ENCODE measurements at regions of chr4 and their contacts with region 1.

Region 1: DNA sequence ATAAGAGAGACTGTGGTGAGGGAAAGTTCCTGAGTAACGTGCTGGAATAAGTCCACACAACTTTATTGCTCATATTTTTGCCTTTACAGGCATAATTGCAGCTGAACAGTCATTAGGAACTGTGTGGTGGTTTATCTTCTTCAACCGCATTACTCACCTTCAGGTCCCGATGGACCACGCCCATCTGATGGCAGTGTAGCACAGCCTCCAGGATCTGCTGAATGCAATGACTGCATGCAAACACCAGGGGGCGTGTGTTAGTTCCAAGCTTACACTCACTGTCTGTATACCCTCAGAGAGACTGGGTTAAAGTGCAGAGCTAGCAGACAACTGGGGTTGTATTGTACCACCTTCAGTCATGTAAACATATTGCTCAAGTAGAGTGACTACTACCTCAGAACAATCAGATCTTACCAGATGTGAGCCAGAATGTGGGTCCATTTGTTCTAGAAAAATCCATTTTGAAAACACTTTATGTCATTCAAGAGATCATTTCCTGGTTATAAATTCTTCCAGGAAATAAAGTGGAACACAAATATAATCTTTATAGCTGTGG is 214.0 kb downstream of the CAMK2D start:
- DNase-seq: peak; percentile 75 to 96 (median 86)
- ATAC-seq: peak; percentile 99
- H3K4me3 ChIP-seq: no peak overlapping the region
- H3K4me3 Mint-ChIP-seq: no peak overlapping the region
- H3K27ac ChIP-seq: no peak overlapping the region
- H3K27ac Mint-ChIP-seq: peak overlapping the region; percentile 68
- H3K4me1 ChIP-seq: peaks cover 5% of the 10 kb centered on the region
- H3K4me1 Mint-ChIP-seq: peaks cover 11% of the 10 kb centered on the region
- H3K27me3 ChIP-seq: no peaks in the 10 kb centered on the region
- H3K27me3 Mint-ChIP-seq: no peaks in the 10 kb centered on the region
- CTCF ChIP-seq: peak; percentile 95

Region 2: DNA sequence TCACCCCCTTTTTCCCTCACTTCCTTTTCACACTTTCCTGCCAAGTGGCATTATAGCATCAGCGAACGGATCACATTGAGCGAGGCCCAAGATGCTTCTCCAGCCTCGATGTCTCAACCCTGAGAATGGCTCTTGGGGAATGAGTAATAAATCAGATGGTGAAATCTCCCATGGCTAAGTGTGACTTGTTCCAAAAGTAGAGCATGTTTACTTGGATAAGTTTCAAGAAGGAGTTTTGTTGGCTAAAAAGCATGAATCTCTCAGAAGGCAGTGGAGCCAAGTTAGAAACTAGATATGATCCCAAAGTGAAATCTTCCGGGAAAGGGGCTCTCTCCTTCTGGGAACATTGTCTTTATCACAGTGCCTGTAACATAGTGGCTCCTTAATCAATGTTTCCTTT is 102.3 kb before region 1 on chr4:
- CTCF ChIA-PET with region 1: no interaction called
- POLR2A ChIA-PET with region 1: no interaction called
- intact Hi-C with region 1: no loop called
- DNase-seq: no peak
- ATAC-seq: no peak
- H3K4me3 ChIP-seq: no peak overlapping the region
- H3K4me3 Mint-ChIP-seq: no peak overlapping the region
- H3K27ac ChIP-seq: no peak overlapping the region
- H3K27ac Mint-ChIP-seq: no peak overlapping the region
- H3K4me1 ChIP-seq: no peaks in the 10 kb centered on the region
- H3K4me1 Mint-ChIP-seq: no peaks in the 10 kb centered on the region
- H3K27me3 ChIP-seq: no peaks in the 10 kb centered on the region
- H3K27me3 Mint-ChIP-seq: no peaks in the 10 kb centered on the region
- CTCF ChIP-seq: no peak

Region 3: DNA sequence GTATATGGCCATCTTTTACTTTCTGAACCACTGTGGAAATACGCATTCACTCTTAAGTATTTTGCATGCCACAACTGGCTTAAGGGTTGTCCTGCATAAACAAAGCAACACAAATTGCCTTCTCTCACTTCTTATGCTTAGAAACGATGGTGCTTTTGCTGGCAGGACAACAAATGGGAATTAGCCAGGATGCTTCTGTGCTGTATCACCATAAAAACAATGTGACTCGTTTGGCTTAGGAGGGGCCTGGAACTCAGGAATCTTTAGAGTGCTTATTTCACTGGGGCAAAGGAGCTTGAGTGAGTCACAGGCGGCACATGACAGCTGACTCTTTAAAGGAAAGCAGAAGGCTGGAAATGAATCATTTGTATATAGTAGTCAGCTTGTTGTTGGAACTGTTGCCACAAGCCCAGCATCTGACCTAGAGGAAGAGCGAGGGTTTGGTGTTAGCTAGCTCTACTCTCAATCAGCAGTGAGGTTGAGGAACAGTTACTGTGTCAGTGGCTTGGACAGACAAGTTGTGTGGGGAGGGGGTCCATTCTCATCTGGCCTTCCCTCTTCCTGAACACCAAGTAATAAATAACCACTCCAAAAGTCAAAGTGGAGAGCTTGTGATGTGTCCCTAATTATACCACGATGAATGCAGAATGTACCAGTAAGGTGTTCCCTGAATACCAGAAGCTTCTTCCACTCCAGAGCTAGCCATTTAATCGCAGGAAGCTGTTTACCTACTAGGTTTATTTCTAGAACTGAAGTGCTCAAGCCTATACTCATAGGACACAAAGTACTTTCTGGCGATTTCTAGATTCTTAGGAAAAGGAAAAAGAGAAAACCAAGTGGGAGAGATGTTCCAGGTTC is 79.2 kb before region 1 on chr4:
- CTCF ChIA-PET with region 1: no interaction called
- POLR2A ChIA-PET with region 1: no interaction called
- intact Hi-C with region 1: no loop called
- DNase-seq: peak in 3 of 14 experiments; percentile 2 to 15 (median 5)
- ATAC-seq: no peak
- H3K4me3 ChIP-seq: no peak overlapping the region
- H3K4me3 Mint-ChIP-seq: no peak overlapping the region
- H3K27ac ChIP-seq: no peak overlapping the region
- H3K27ac Mint-ChIP-seq: no peak overlapping the region
- H3K4me1 ChIP-seq: no peaks in the 10 kb centered on the region
- H3K4me1 Mint-ChIP-seq: no peaks in the 10 kb centered on the region
- H3K27me3 ChIP-seq: no peaks in the 10 kb centered on the region
- H3K27me3 Mint-ChIP-seq: no peaks in the 10 kb centered on the region
- CTCF ChIP-seq: no peak

Region 4: GRCh38 chr4:113636438-113636818 is 88.9 kb after region 1 on chr4:
- CTCF ChIA-PET with region 1: interaction called, 15 read pairs
- POLR2A ChIA-PET with region 1: interaction called, 6 read pairs
- intact Hi-C with region 1: no loop called
- DNase-seq: peak in 6 of 14 experiments; percentile 11 to 75 (median 43)
- ATAC-seq: peak; percentile 76
- H3K4me3 ChIP-seq: no peak overlapping the region
- H3K4me3 Mint-ChIP-seq: peak overlapping the region; percentile 39
- H3K27ac ChIP-seq: peak overlapping the region in 1 of 2 donors; percentile 33
- H3K27ac Mint-ChIP-seq: peak overlapping the region; percentile 80
- H3K4me1 ChIP-seq: peaks cover 22% of the 10 kb centered on the region
- H3K4me1 Mint-ChIP-seq: peaks cover 55% of the 10 kb centered on the region
- H3K27me3 ChIP-seq: no peaks in the 10 kb centered on the region
- H3K27me3 Mint-ChIP-seq: no peaks in the 10 kb centered on the region
- CTCF ChIP-seq: peak; percentile 28

Region 5: DNA sequence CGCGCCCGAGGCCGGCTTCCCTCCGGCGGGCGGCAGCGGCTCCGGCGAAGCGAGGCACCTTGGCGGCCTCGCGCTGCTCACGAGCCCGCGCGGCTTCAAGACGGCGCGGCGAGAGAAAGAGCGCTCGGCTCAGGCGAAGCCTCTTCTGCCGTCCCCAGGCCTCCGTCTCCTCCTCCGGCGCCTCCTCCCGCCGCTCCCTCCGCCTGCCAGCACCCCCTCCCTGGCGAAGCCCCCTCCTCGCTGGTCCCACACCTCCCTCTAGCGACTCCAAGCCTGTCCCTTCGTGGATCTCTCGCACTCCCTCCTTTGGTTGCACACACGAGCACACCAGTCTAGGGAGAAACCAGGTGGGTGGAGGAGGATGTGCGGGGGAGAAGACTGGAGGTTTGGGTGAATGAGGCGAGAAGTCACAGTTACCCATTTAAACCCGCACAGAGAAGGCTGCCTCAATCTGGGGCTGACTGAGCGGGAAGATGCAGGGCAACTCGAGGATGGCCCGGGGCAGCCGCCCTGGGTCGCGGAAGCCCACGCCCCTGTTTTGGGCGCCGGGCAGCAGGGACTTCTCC is 214.1 kb after region 1 on chr4 and contains the start of gene CAMK2D:
- CTCF ChIA-PET with region 1: interaction called, 17 read pairs
- POLR2A ChIA-PET with region 1: interaction called, 20 read pairs
- intact Hi-C with region 1: loop called (anchors 1 to 5 kb)
- DNase-seq: peak; percentile 65 to 95 (median 79)
- ATAC-seq: peak; percentile 65
- H3K4me3 ChIP-seq: peak within 1 kb of the TSS; percentile 87
- H3K4me3 Mint-ChIP-seq: peak within 1 kb of the TSS; percentile 95
- H3K27ac ChIP-seq: peak within 1 kb of the TSS; percentile 94 to 96
- H3K27ac Mint-ChIP-seq: peak within 1 kb of the TSS; percentile 95
- H3K4me1 ChIP-seq: peaks cover 7% of the 10 kb centered on the region
- H3K4me1 Mint-ChIP-seq: peaks cover 37% of the 10 kb centered on the region
- H3K27me3 ChIP-seq: no peaks in the 10 kb centered on the region
- H3K27me3 Mint-ChIP-seq: no peaks in the 10 kb centered on the region
- CTCF ChIP-seq: peak; percentile 37
- total RNA-seq, gene CAMK2D: 29.9 to 32.9 TPM

Region 6: GRCh38 chr4:114077610-114078009 is 530.0 kb after region 1 on chr4:
- CTCF ChIA-PET with region 1: no interaction called
- POLR2A ChIA-PET with region 1: no interaction called
- intact Hi-C with region 1: loop called in 1 of 2 experiments (anchors 5 kb)
- DNase-seq: no peak
- ATAC-seq: no peak
- H3K4me3 ChIP-seq: no peak overlapping the region
- H3K4me3 Mint-ChIP-seq: no peak overlapping the region
- H3K27ac ChIP-seq: no peak overlapping the region
- H3K27ac Mint-ChIP-seq: no peak overlapping the region
- H3K4me1 ChIP-seq: no peaks in the 10 kb centered on the region
- H3K4me1 Mint-ChIP-seq: no peaks in the 10 kb centered on the region
- H3K27me3 ChIP-seq: no peaks in the 10 kb centered on the region
- H3K27me3 Mint-ChIP-seq: no peaks in the 10 kb centered on the region
- CTCF ChIP-seq: no peak

Measured in CD4-positive, alpha-beta T cell (primary cell).